WTC11 (cell line): ENCODE measurements at regions of chr17 and their contacts with region 1.

Region 1: GRCh38 chr17:29369831-29370735 is 20.1 kb upstream of the TAOK1 start:
- DNase-seq: peak; percentile 68
- ATAC-seq: peak; percentile 94
- H3K4me3 Mint-ChIP-seq: no peak overlapping the region
- H3K27ac Mint-ChIP-seq: no peak overlapping the region
- H3K4me1 Mint-ChIP-seq: peaks cover 7% of the 10 kb centered on the region
- H3K27me3 Mint-ChIP-seq: no peaks in the 10 kb centered on the region
- CTCF ChIP-seq: peak; percentile 69

Region 2: DNA sequence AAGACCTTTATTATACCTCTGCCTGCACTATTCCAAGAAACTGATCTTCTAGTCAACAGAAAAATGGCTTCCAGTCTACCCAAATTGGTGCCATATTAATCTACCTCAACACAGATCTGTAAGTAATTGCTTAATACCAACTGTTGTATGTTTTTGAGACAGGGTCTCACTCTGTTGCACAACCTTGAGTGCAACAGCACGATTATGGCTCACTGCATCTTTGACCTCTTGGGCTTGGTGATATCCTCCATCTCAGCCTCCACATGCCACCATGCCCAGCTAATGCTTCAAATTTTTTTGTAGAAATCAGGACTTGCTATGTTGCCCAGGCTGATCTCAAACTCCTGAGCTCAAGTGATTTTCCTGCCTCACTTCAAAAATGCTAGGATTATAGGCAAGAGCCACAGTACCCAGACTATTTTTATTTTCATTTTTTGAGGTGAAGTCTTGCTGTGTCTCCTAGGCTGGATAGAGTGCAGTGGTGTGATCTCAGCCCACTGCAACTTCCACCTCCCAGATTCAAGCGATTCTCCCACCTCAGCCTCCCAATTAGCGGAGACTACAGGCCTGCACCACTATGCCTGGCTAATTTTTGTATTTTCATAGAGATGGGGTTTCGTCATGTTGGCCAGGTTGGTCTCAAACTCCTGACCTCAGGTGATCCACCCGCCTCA is 90.5 kb before region 1 on chr17:
- CTCF ChIA-PET with region 1: no interaction called
- POLR2A ChIA-PET with region 1: no interaction called
- DNase-seq: no peak
- ATAC-seq: no peak
- H3K4me3 Mint-ChIP-seq: 0 out of 2 replicates have a peak overlapping the region, but pooled peaks have one; percentile 21
- H3K27ac Mint-ChIP-seq: peak overlapping the region; percentile 79; the same call in 1 of the 2 replicates
- H3K4me1 Mint-ChIP-seq: peaks cover 54% of the 10 kb centered on the region
- H3K27me3 Mint-ChIP-seq: no peaks in the 10 kb centered on the region
- CTCF ChIP-seq: no peak

Region 3: DNA sequence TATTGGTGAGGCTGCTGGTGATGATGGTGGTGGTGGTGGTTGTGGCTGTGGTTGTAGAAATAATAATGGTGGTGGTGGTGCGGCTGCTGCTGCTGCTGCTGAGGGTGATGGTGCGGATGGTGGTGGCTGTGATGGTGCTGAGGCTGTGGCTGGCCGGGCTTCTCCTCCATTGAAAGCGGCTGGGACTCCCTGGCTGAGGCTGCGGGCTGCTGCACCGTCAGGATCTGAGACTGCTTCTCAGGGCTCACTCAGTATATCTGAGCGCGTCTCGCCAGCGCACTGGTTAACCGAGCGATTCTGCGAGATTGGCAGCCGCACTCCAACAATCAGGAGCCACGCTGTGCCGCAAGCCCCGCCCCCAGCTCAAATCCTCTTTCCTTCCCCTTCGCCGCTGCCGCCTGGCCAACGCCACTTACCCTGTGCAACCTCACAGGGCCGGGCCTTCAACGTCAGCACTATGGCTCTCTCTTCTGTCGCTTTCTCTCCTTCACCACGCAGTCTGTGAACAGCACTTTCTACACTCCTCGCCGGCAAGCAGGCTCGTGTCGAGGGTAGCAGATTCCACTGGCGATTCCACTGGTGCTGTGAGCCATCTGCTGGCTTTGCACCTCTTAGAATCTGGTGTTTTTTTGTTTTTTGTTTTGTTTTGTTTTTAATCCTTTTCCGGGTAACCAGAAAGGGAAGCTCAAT is 76.0 kb before region 1 on chr17 and contains the start of gene NUFIP2:
- CTCF ChIA-PET with region 1: interaction called, 10 read pairs
- POLR2A ChIA-PET with region 1: interaction called, 5 read pairs
- DNase-seq: peak; percentile 99
- ATAC-seq: peak; percentile 94
- H3K4me3 Mint-ChIP-seq: peak within 1 kb of the TSS; percentile 100
- H3K27ac Mint-ChIP-seq: peak within 1 kb of the TSS; percentile 99
- H3K4me1 Mint-ChIP-seq: peaks cover 32% of the 10 kb centered on the region
- H3K27me3 Mint-ChIP-seq: no peaks in the 10 kb centered on the region
- CTCF ChIP-seq: no peak
- total RNA-seq, gene NUFIP2: 87.1 to 93.1 TPM (median 90.5 TPM) in 3 replicates

Region 4: DNA sequence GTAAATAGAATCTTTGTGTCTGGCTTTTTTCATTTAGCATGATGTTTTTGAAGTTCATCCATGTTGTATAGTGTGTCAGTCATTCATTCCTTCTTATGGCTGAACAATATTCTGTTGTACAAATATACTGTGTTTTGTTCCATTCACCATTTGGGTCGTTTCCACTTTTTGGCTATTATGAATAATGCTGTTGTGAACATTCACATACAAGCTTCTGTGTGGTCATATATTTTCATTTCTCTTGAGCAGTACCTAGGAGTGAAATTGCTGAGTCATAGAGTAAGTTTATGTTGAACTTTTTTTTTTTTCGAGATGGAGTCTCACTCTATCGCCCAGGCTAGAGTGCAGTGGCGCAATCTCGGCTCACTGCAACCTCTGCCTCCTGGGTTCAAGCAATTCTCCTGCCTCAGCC is 12.3 kb before region 1 on chr17:
- CTCF ChIA-PET with region 1: interaction called, 13 read pairs
- POLR2A ChIA-PET with region 1: no interaction called
- DNase-seq: no peak
- ATAC-seq: no peak
- H3K4me3 Mint-ChIP-seq: no peak overlapping the region
- H3K27ac Mint-ChIP-seq: no peak overlapping the region
- H3K4me1 Mint-ChIP-seq: no peaks in the 10 kb centered on the region
- H3K27me3 Mint-ChIP-seq: no peaks in the 10 kb centered on the region
- CTCF ChIP-seq: no peak

Region 5: DNA sequence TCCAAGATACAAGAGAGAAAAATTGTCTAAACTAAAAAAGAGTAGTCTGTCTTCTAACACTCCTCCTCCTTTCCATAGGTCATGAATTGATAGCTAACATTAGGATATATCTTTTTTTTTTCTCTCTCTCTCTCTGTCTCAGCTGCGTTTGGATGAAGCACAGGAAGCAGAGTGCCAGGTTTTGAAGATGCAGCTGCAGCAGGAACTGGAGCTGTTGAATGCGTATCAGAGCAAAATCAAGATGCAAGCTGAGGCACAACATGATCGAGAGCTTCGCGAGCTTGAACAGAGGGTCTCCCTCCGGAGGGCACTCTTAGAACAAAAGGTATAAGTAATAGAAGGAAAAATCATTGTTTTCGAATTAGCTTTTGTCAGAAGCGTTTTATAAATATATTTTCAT is 163.9 kb after region 1 on chr17:
- CTCF ChIA-PET with region 1: interaction called, 13 read pairs
- POLR2A ChIA-PET with region 1: interaction called, 6 read pairs
- DNase-seq: no peak
- ATAC-seq: no peak
- H3K4me3 Mint-ChIP-seq: no peak overlapping the region
- H3K27ac Mint-ChIP-seq: no peak overlapping the region
- H3K4me1 Mint-ChIP-seq: no peaks in the 10 kb centered on the region
- H3K27me3 Mint-ChIP-seq: no peaks in the 10 kb centered on the region
- CTCF ChIP-seq: no peak

Region 6: GRCh38 chr17:29561554-29562517 is 191.8 kb after region 1 on chr17:
- CTCF ChIA-PET with region 1: interaction called, 56 read pairs
- POLR2A ChIA-PET with region 1: no interaction called
- DNase-seq: peak; percentile 8
- ATAC-seq: no peak
- H3K4me3 Mint-ChIP-seq: no peak overlapping the region
- H3K27ac Mint-ChIP-seq: no peak overlapping the region
- H3K4me1 Mint-ChIP-seq: peaks cover 8% of the 10 kb centered on the region
- H3K27me3 Mint-ChIP-seq: peaks cover 32% of the 10 kb centered on the region
- CTCF ChIP-seq: no peak

Region 7: DNA sequence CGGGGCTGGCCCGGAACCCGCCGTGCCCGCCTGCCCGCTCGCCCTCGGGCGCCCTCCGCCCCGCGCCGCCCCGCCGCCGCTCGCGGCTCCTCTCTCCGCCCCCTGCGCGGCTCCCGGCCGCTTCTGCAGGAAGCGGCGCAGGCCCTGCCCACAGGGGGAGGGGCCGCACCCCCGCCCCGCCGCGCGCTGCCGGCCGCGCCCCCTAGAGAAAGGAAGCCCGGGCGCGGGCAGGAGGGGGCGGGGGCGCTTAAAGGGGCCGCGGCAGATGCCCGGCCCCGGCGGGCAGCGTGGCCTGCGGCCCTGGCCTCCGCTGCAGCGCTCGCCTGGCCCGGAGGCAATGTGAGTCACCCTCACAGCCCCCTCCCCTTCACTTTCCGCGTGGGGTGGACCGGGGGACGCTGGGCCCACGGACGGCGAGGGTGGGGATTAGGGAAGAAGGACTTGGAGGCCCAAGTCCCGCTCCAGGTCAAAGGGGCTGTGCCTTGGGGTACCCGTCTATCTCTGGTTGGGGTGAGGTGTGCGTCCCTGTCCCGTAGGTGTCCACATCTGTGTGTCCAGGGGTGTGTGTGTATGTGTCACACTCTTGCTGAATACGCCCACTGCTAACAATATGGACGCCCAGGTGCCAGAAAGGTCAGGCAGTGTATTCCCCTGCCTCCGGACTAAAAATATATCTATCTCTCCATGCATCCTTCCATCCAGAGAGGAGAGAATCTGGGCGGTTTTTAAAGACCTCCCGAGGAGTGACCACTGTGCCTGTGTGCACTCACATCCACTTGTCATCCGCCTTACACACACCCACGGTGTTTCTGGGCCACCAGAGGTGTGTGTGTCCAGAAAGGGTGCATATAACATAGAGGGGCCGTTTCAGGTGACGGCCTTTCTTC is 219.7 kb after region 1 on chr17 and contains the start of gene GIT1:
- CTCF ChIA-PET with region 1: interaction called, 43 read pairs
- POLR2A ChIA-PET with region 1: no interaction called
- DNase-seq: peak; percentile 79
- ATAC-seq: peak; percentile 35
- H3K4me3 Mint-ChIP-seq: peak within 1 kb of the TSS; percentile 87
- H3K27ac Mint-ChIP-seq: no peak within 1 kb of the TSS
- H3K4me1 Mint-ChIP-seq: peaks cover 51% of the 10 kb centered on the region
- H3K27me3 Mint-ChIP-seq: peaks cover 4% of the 10 kb centered on the region; the same call in 1 of the 2 replicates
- CTCF ChIP-seq: no peak
- total RNA-seq, gene GIT1: 43.9 to 66.9 TPM (median 45.0 TPM) in 3 replicates